Activated CD4-positive, alpha-beta memory T cell treated with anti-CD3 and anti-CD28 coated beads for 36 hours (primary cell): ENCODE measurements at regions of chr2 and their contacts with region 1.

Region 1: DNA sequence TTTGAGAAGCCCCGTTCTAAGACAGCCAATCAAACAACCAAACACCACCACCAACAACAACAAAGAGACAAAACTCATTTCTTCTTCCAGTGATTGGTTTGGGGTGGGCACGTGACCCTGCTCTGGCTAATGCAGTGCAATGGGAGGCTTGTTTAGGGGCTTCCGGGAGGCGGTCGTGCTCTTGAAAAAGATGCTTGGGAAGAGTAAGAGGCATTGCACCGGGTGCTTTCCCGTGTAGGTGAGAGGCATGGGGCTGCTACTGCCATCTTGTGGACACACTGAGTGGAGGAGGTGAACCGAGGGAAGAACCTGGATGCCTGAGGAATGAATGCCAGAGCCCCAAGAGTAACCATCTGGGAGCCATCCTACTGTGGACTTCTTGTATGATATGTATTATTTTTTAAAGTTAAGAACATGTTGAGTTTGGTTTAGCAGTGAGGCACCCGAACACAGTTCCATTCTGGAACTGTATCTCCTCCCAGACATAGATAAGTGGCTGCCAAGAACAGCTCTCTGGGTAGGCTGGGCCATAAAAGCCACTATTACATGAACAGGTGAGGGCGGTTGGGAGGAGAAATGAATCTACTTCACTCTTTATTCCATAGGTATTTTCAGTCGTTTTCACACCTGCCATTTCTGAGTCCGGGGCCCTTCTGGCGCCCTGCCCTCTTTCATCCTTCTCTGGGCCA is 19.1 kb upstream of the ARHGAP25 start:
- DNase-seq: peak; percentile 77
- H3K4me3 Mint-ChIP-seq: peak overlapping the region; percentile 8
- H3K27ac Mint-ChIP-seq: peak overlapping the region; percentile 80
- H3K4me1 Mint-ChIP-seq: peaks cover 81% of the 10 kb centered on the region
- H3K27me3 Mint-ChIP-seq: no peaks in the 10 kb centered on the region

Region 2: GRCh38 chr2:68487773-68488355 is 227.6 kb before region 1 on chr2:
- CTCF ChIA-PET with region 1: no interaction called
- POLR2A ChIA-PET with region 1: no interaction called
- intact Hi-C with region 1: loop called (anchors 1 kb)
- DNase-seq: no peak
- H3K4me3 Mint-ChIP-seq: no peak overlapping the region
- H3K27ac Mint-ChIP-seq: no peak overlapping the region
- H3K4me1 Mint-ChIP-seq: peaks cover 2% of the 10 kb centered on the region
- H3K27me3 Mint-ChIP-seq: no peaks in the 10 kb centered on the region

Region 3: DNA sequence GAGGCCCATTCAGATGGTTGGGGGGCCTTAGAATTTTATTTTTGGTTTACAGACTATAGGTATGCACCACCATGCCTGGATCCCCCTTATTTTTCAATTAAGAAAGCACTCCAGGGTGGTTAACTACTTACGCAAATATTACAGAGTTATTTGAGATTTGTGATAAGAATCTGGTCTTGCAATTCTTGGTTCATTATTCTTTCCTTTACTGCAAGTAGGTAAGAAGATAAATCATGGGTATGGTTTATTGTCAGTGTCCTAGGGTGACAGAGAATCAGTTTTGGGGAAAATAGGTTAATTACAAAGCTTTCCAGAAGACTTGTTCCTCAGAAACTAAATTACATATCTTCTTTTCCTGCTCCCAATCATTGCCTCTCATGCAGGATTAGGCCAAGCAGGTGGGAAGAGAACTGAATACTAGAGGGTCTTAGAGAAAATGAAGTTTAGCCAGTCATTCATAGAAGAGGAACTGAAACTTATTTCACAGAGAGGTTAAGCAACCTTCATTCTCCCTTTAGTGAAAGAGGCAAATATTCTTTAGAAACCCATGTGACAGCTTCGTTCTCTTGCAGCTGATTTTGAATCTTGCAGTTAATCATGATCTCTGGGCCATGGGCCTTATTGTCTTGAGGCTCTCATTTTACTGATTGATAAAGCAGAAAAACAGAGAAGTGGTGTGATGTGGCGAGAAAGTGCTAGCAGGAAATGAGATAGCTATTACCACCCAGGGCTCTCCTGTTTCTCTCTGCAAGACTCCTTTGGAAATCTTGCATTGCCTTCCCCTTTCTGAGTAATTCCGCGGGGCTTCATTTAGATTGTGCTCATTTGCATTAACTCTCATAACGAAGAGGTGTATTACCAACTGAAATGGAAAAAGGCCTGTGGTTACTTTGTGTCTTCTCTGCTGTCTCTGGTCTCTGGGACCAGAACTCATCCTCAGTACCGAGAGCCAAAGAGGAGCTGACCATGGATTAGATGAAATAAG is 25.7 kb before region 1 on chr2:
- CTCF ChIA-PET with region 1: interaction called, 18 read pairs
- POLR2A ChIA-PET with region 1: no interaction called
- intact Hi-C with region 1: loop called (anchors 2 kb)
- DNase-seq: peak; percentile 28
- H3K4me3 Mint-ChIP-seq: no peak overlapping the region
- H3K27ac Mint-ChIP-seq: peak overlapping the region; percentile 26
- H3K4me1 Mint-ChIP-seq: peaks cover 18% of the 10 kb centered on the region
- H3K27me3 Mint-ChIP-seq: peaks cover 8% of the 10 kb centered on the region

Region 4: GRCh38 chr2:68742626-68743415 is 27.3 kb after region 1 on chr2:
- CTCF ChIA-PET with region 1: interaction called, 57 read pairs
- POLR2A ChIA-PET with region 1: interaction called, 16 read pairs
- intact Hi-C with region 1: loop called (anchors 1 kb)
- DNase-seq: no peak
- H3K4me3 Mint-ChIP-seq: peak overlapping the region; percentile 40
- H3K27ac Mint-ChIP-seq: peak overlapping the region; percentile 75
- H3K4me1 Mint-ChIP-seq: peaks cover 90% of the 10 kb centered on the region
- H3K27me3 Mint-ChIP-seq: no peaks in the 10 kb centered on the region

Region 5: GRCh38 chr2:68774569-68775271 is 59.2 kb after region 1 on chr2:
- CTCF ChIA-PET with region 1: interaction called, 6 read pairs
- POLR2A ChIA-PET with region 1: interaction called, 4 read pairs
- intact Hi-C with region 1: loop called (anchors 1 kb)
- DNase-seq: peak; percentile 83
- H3K4me3 Mint-ChIP-seq: peak overlapping the region; percentile 65
- H3K27ac Mint-ChIP-seq: peak overlapping the region; percentile 85
- H3K4me1 Mint-ChIP-seq: peaks cover 87% of the 10 kb centered on the region
- H3K27me3 Mint-ChIP-seq: no peaks in the 10 kb centered on the region

Region 6: DNA sequence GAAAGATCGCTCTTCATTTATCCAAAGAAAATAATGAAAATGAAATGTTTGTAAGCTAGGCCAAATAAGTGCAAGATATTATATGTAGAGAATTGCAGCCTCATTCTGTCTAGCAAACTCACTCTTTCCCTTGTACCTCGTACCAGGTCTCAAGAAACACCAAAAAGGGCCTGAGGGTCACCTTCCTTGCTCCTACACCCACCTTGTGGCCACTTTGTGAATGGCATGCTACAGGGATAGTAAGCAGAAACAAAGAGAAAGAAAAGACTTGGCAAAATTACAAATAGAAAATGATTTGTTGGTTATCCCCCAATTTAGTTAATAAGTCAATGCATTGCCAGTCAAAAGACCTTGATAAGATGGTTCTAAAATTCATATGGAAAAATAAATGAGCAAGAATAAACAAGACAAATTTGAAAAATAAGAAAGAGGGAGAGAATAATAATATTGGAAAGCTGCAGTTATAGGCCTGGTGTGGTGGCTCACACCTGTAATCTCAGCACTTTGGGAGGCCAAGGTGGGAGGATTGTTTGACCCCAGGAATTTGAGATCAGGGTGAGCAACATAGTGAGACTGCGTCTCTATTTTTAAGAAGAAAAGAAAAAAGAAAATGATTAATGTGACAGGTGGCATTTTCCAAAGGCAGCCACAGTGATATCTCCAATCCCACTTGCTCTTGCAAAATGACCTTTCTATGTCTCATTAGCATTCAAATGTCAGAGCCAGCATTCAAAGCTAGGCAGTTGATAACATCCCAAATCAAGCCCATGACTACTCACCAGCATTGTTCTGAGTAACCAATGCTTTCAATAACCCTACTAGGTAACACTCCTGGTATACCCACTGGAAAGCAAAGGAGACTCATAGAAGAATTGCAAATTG is 194.5 kb after region 1 on chr2:
- CTCF ChIA-PET with region 1: interaction called, 19 read pairs
- POLR2A ChIA-PET with region 1: interaction called, 8 read pairs
- intact Hi-C with region 1: loop called (anchors 1 kb)
- DNase-seq: peak; percentile 85
- H3K4me3 Mint-ChIP-seq: no peak overlapping the region
- H3K27ac Mint-ChIP-seq: peak overlapping the region; percentile 78
- H3K4me1 Mint-ChIP-seq: peaks cover 36% of the 10 kb centered on the region
- H3K27me3 Mint-ChIP-seq: no peaks in the 10 kb centered on the region

Region 7: GRCh38 chr2:68961380-68961779 is 245.9 kb after region 1 on chr2:
- CTCF ChIA-PET with region 1: no interaction called
- POLR2A ChIA-PET with region 1: no interaction called
- intact Hi-C with region 1: no loop called
- DNase-seq: no peak
- H3K4me3 Mint-ChIP-seq: no peak overlapping the region
- H3K27ac Mint-ChIP-seq: no peak overlapping the region
- H3K4me1 Mint-ChIP-seq: no peaks in the 10 kb centered on the region
- H3K27me3 Mint-ChIP-seq: peaks cover 13% of the 10 kb centered on the region

Region 8: DNA sequence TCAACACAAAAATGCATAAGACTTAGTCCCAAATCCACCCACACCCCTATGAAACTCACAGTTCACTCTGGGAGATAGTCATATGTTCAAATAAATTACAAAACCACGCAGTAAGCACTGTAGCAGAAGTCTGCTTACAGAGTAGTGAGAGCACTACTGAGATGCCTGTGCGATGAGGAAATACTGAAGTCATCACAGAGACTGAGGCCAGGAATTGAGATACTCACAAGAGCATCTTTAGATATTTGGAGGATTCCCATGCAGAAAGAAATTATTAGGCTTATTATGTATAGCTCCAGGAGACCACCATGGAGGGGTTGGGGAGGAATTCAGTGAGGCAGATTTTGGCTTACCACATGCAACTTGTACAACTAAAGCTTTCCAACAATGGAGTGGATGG is 379.8 kb after region 1 on chr2:
- CTCF ChIA-PET with region 1: no interaction called
- POLR2A ChIA-PET with region 1: no interaction called
- intact Hi-C with region 1: no loop called
- DNase-seq: no peak
- H3K4me3 Mint-ChIP-seq: no peak overlapping the region
- H3K27ac Mint-ChIP-seq: no peak overlapping the region
- H3K4me1 Mint-ChIP-seq: no peaks in the 10 kb centered on the region
- H3K27me3 Mint-ChIP-seq: peaks cover 12% of the 10 kb centered on the region